Prostate gland (tissue), 2 donors: ENCODE measurements at regions of chr17 and their contacts with region 1.

Region 1: GRCh38 chr17:76121932-76122430 is 18.4 kb upstream of the EXOC7 start:
- DNase-seq: no peak
- H3K4me3 ChIP-seq: peak overlapping the region; percentile 9 to 20
- H3K27ac ChIP-seq: no peak overlapping the region
- H3K4me1 ChIP-seq: peaks cover 6% of the 10 kb centered on the region
- H3K27me3 ChIP-seq: no peaks in the 10 kb centered on the region
- CTCF ChIP-seq: no peak
- POLR2A ChIP-seq: no peak

Region 2: DNA sequence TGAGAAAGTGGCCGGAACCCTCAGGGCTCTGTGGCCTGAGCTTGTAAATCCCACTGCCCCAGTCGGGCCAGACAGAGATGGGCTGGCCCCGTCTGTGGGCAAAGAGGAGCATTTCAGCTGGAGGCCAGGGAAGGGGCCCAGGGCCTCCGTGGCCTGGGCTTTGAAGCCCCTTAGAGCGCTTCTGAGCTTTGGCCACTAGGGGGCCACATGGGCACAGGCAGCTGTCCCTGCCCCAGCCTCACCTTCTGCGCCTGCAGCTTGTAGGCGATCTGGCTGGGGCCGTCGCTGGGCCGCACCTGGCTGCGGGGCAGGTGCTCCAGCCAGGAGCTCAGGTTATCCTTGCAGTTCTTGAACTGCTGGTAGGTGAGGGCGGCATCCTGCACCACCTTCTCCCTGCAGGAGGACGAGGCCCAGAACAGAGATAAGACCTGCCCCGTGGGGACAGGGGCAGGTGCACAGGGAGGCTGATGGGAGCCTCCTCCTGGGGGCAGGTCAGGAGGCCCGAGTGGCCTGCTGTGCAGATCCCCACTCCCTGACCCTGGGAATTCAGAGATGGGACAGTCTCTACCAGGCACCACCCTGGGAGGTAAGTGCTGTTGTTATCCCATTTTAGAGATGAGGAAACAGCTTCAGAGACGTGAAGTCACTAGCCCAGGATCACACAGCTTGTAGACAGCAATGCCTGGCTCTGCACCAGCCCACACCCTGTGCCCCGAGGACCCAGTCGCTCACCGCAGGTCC is 107.6 kb before region 1 on chr17:
- intact Hi-C with region 1: no loop called
- DNase-seq: peak; percentile 69
- H3K4me3 ChIP-seq: no peak overlapping the region
- H3K27ac ChIP-seq: no peak overlapping the region
- H3K4me1 ChIP-seq: no peaks in the 10 kb centered on the region
- H3K27me3 ChIP-seq: no peaks in the 10 kb centered on the region
- CTCF ChIP-seq: peak; percentile 82 to 95 (median 91)
- POLR2A ChIP-seq: no peak

Region 3: GRCh38 chr17:76182016-76182764 is 60.2 kb after region 1 on chr17:
- intact Hi-C with region 1: loop called (anchors 5 kb)
- DNase-seq: peak; percentile 83
- H3K4me3 ChIP-seq: no peak overlapping the region
- H3K27ac ChIP-seq: no peak overlapping the region
- H3K4me1 ChIP-seq: no peaks in the 10 kb centered on the region
- H3K27me3 ChIP-seq: no peaks in the 10 kb centered on the region
- CTCF ChIP-seq: peak; percentile 74 to 92 (median 90)
- POLR2A ChIP-seq: no peak

Region 4: DNA sequence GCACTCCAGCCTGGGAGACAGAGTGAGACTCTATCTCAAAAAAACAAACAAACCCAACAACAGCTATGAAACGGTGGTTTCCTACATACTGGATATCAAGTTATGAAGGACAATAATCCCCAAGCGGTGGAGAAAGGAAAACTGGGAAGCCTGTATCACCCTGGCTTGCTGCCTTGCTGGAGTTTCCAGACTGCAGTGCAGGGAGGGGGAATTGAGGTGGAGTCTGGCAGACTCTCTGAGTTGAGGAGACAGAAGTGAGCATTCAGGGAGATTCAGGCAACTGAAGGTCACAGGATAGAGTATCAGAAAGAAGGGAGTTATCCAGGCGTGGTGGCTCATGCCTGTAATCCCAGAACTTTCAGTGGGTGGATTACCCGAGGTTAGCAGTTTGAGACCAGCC is 174.2 kb after region 1 on chr17:
- intact Hi-C with region 1: loop called (anchors 5 kb)
- DNase-seq: no peak
- H3K4me3 ChIP-seq: no peak overlapping the region
- H3K27ac ChIP-seq: no peak overlapping the region
- H3K4me1 ChIP-seq: no peaks in the 10 kb centered on the region
- H3K27me3 ChIP-seq: no peaks in the 10 kb centered on the region
- CTCF ChIP-seq: no peak
- POLR2A ChIP-seq: no peak